HEK293T (cell line): ENCODE measurements at regions of chr1 and their contacts with region 1.

Region 1: GRCh38 chr1:47388891-47389238 is 27.2 kb upstream of the FOXE3 start:
- DNase-seq: peak; percentile 78

Region 2: DNA sequence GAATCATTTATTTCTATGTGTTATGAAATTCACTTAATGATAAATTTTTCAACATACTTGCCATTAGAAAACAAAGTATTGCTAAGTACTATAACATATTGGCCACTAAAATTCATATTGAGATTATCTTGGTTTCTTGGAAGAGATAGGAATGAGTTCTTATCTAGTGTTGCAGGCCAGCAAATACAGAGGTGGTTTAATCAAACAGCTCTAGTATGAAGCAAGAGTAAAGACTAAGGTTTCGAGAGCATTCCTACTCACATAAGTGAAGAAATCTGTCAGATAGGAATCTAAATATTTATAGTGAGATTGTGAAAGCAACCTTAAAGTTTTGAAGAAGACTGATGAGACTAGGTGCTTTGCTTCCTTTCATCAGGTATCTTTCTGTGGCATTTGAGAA is 10.7 kb before region 1 on chr1:
- CTCF ChIA-PET with region 1: no interaction called
- POLR2A ChIA-PET with region 1: no interaction called
- DNase-seq: no peak

Region 3: GRCh38 chr1:47424336-47424982 is 35.6 kb after region 1 on chr1:
- CTCF ChIA-PET with region 1: interaction called, 10 read pairs
- POLR2A ChIA-PET with region 1: no interaction called
- DNase-seq: peak; percentile 77

Region 4: GRCh38 chr1:47432071-47433036 is 43.5 kb after region 1 on chr1:
- CTCF ChIA-PET with region 1: interaction called, 10 read pairs
- POLR2A ChIA-PET with region 1: no interaction called
- DNase-seq: peak; percentile 78

Region 5: GRCh38 chr1:47725992-47726855 is 337.4 kb after region 1 on chr1:
- CTCF ChIA-PET with region 1: interaction called, 29 read pairs
- POLR2A ChIA-PET with region 1: interaction called, 3 read pairs
- DNase-seq: peak; percentile 85